B cell (primary cell): ENCODE measurements at regions of chr15 and their contacts with region 1.

Region 1: DNA sequence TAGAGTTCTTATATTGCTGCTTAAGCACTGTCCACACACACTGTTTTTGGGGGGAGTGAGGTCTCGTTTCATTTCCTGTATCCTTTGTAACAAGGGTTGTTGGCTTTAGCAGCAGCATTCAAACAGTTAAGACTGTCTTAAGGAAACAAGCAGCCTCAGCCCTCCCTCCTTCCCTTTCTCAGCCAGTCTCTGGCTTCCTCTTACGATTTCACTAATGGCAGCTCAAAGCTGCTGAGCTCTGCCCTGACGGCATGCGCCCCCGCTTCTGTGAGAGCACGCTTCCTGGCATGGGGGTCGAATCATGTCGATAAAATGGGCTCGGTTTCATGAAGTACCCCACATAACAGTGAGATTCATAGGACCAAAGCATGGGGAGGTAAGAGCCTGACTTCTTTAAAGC is 105.0 kb downstream of the KLHL25 start:
- DNase-seq: peak; percentile 75
- ATAC-seq: peak; percentile 68
- H3K4me3 ChIP-seq: peak overlapping the region; percentile 76 to 95 (median 81)
- H3K4me3 Mint-ChIP-seq: peak overlapping the region; percentile 98
- H3K27ac ChIP-seq: peak overlapping the region; percentile 84 to 85
- H3K27ac Mint-ChIP-seq: peak overlapping the region; percentile 98
- H3K4me1 ChIP-seq: peaks cover 68 to 70% of the 10 kb centered on the region in 2 donors
- H3K4me1 Mint-ChIP-seq: peaks cover 74% of the 10 kb centered on the region
- H3K27me3 ChIP-seq: no peaks in the 10 kb centered on the region
- H3K27me3 Mint-ChIP-seq: no peaks in the 10 kb centered on the region
- CTCF ChIP-seq: no peak

Region 2: DNA sequence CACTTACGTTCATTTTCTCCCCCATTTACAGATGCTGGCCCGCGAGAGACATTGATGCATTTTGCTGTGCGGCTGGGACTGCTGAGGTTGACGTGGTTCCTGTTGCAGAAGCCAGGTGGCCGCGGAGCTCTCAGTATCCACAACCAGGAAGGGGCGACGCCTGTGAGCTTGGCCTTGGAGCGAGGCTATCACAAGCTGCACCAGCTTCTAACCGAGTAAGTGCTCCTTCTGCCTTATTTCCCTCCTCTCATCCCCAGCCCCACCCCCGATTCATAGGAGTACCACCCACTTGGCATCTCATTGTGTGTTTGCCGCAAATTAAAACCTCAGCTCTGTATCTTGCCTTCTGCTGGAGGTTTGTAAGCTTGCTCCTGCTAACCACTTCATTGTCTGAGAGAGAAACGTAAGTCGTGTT is 146.0 kb before region 1 on chr15:
- CTCF ChIA-PET with region 1: no interaction called
- POLR2A ChIA-PET with region 1: interaction called, 3 read pairs
- intact Hi-C with region 1: loop called (anchors 5 kb)
- DNase-seq: peak; percentile 60
- ATAC-seq: peak; percentile 67
- H3K4me3 ChIP-seq: peak overlapping the region in 1 of 5 experiments; percentile 42
- H3K4me3 Mint-ChIP-seq: peak overlapping the region; percentile 60
- H3K27ac ChIP-seq: peak overlapping the region; percentile 28 to 42
- H3K27ac Mint-ChIP-seq: peak overlapping the region; percentile 62
- H3K4me1 ChIP-seq: peaks cover 54 to 59% of the 10 kb centered on the region in 2 donors
- H3K4me1 Mint-ChIP-seq: peaks cover 67% of the 10 kb centered on the region
- H3K27me3 ChIP-seq: no peaks in the 10 kb centered on the region
- H3K27me3 Mint-ChIP-seq: no peaks in the 10 kb centered on the region
- CTCF ChIP-seq: no peak

Region 3: GRCh38 chr15:85639752-85640381 is 49.9 kb before region 1 on chr15:
- CTCF ChIA-PET with region 1: no interaction called
- POLR2A ChIA-PET with region 1: no interaction called
- intact Hi-C with region 1: loop called (anchors 10 kb)
- DNase-seq: no peak
- ATAC-seq: no peak
- H3K4me3 ChIP-seq: no peak overlapping the region
- H3K4me3 Mint-ChIP-seq: no peak overlapping the region
- H3K27ac ChIP-seq: no peak overlapping the region
- H3K27ac Mint-ChIP-seq: no peak overlapping the region
- H3K4me1 ChIP-seq: peaks cover 0 to 1% of the 10 kb centered on the region in 2 donors
- H3K4me1 Mint-ChIP-seq: peaks cover 12% of the 10 kb centered on the region
- H3K27me3 ChIP-seq: no peaks in the 10 kb centered on the region
- H3K27me3 Mint-ChIP-seq: no peaks in the 10 kb centered on the region
- CTCF ChIP-seq: no peak

Region 4: GRCh38 chr15:85702321-85703101 is 12.8 kb after region 1 on chr15:
- CTCF ChIA-PET with region 1: interaction called, 25 read pairs
- POLR2A ChIA-PET with region 1: interaction called, 49 read pairs
- intact Hi-C with region 1: loop called (anchors 1 kb)
- DNase-seq: peak; percentile 47
- ATAC-seq: no peak
- H3K4me3 ChIP-seq: peak overlapping the region in 1 of 5 experiments; percentile 18
- H3K4me3 Mint-ChIP-seq: peak overlapping the region; percentile 84
- H3K27ac ChIP-seq: peak overlapping the region; percentile 61 to 86
- H3K27ac Mint-ChIP-seq: peak overlapping the region; percentile 94
- H3K4me1 ChIP-seq: peaks cover 57 to 58% of the 10 kb centered on the region in 2 donors
- H3K4me1 Mint-ChIP-seq: peaks cover 74% of the 10 kb centered on the region
- H3K27me3 ChIP-seq: no peaks in the 10 kb centered on the region
- H3K27me3 Mint-ChIP-seq: no peaks in the 10 kb centered on the region
- CTCF ChIP-seq: no peak

Region 5: DNA sequence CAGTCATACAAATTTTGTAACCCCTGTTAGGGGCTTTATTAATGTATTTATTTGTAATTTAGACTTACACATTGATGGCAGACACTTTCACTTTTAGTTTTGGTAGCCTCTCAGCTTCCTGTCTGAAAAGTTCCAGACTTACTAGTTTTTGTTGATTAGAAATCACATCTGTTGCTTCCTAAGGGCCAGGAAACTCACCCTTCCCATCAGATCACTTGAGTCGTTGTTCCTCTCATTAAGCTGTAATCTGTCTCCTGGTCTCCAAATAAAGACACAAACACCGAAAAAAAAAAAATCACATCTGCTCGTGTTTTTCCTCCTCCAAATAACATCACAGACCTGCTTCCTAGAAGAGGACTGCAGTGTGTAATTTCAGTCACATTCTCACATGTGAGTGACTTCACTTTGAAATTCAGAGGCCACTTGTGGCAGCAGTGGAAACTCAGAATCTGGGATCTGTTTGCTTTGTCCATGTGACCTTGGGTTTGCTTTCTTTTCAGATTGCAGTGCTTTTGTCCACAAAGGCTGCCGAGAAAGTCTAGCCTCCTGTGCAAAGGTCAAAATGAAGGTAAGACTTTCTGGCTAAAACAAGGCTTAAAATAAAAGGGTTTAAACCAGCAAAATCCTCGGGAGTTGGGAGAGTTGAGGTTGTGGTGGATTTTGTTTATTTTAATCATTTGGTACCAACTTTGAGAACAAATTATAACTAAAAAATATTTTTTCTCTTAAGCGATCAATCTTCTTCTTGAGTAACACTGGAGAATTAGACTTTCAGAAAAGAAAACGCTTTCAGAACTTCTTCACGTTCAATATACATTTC is 18.0 kb after region 1 on chr15:
- CTCF ChIA-PET with region 1: interaction called, 25 read pairs
- POLR2A ChIA-PET with region 1: interaction called, 49 read pairs
- intact Hi-C with region 1: loop called (anchors 1 kb)
- DNase-seq: no peak
- ATAC-seq: peak; percentile 37
- H3K4me3 ChIP-seq: peak overlapping the region; percentile 9 to 66 (median 29)
- H3K4me3 Mint-ChIP-seq: peak overlapping the region; percentile 82
- H3K27ac ChIP-seq: peak overlapping the region; percentile 96 to 99
- H3K27ac Mint-ChIP-seq: peak overlapping the region; percentile 96
- H3K4me1 ChIP-seq: peaks cover 51 to 56% of the 10 kb centered on the region in 2 donors
- H3K4me1 Mint-ChIP-seq: peaks cover 71% of the 10 kb centered on the region
- H3K27me3 ChIP-seq: no peaks in the 10 kb centered on the region
- H3K27me3 Mint-ChIP-seq: no peaks in the 10 kb centered on the region
- CTCF ChIP-seq: no peak

Region 6: DNA sequence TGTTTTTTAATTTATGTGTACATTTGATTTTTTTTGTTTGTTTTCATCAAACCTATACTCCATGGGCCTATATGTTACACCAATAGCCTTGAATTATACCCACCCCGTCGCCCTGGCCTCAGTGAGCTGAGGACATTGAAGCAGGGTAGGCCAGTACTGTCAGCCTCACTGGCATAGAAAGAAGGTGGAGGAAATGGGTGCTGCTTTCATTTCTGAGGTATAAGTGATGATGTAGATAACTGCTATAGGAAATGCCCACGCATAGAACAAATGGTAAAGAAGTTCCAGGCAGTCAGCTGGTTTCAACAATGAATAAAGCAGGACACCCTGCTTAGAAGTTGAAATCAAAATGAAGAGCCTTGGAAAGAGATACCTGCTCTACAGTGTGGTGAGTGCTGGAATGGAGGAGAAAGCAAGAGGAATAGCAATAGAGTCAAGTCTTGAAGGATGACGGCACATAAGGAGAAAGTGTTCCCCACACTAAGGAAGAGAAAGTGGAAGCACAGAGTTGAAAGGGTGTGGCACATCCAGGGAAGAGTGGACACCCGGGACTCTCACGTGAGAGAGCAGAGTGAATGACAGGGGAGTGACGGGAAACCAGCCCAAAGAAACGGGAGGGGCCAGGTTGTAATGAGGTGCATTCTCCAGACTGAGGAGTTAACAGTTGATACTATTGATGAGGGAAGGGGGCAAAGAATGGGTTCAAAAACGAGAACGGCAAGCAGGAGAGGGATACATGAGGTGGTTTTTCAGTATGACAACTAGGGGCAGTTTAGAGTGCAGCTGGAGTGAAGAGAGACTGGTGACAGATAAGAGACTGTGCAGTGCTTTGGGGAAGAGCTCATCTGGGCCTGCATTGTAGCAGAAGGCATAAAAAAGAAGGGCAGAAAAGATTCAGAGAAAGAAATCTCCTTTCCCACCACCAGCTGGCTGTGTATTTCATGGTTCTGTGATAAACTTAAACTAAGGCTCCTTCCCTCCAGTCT is 34.5 kb after region 1 on chr15:
- CTCF ChIA-PET with region 1: interaction called, 3 read pairs
- POLR2A ChIA-PET with region 1: no interaction called
- intact Hi-C with region 1: loop called (anchors 5 kb)
- DNase-seq: no peak
- ATAC-seq: no peak
- H3K4me3 ChIP-seq: no peak overlapping the region
- H3K4me3 Mint-ChIP-seq: no peak overlapping the region
- H3K27ac ChIP-seq: peak overlapping the region in 1 of 2 donors; percentile 44
- H3K27ac Mint-ChIP-seq: peak overlapping the region; percentile 2
- H3K4me1 ChIP-seq: no peaks in the 10 kb centered on the region
- H3K4me1 Mint-ChIP-seq: peaks cover 4% of the 10 kb centered on the region
- H3K27me3 ChIP-seq: no peaks in the 10 kb centered on the region
- H3K27me3 Mint-ChIP-seq: no peaks in the 10 kb centered on the region
- CTCF ChIP-seq: no peak

Region 7: DNA sequence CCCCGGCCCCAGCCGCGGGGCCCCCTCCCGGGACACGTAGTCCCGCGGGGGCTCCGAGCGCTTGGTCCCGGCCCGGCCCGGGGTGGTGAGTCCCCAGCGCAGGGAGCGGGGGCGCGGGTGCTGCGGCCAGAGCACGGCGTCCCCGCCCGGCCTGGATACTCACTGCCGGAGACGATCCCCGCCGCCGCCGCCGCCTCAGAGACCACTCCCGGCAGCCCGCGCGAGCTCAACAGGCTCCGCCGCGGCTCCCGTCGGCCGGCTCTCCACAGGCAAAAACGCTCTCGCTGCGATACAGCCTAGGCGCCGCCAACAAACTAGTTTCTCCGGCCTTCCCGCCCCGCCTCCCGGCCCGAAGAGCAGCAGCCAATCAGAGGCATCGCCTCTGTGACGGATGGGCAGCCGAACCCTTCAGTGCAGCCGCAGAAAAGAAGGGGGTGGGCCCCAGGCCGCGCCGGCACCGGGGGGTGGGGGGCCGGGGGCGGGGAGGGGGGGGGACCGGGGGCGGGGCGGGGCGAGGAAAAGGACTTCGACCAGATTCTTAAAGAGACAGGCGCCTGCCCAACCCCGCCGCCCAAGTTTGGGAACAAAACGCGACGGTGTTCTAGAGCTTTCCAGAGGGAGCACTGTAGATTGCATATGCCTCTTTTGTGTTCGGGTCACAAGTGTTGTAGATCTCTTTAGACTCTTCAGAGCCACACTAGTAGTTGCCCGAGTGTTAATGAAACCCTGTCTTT is 105.0 kb after region 1 on chr15 and contains the start of gene KLHL25:
- CTCF ChIA-PET with region 1: no interaction called
- POLR2A ChIA-PET with region 1: no interaction called
- intact Hi-C with region 1: loop called (anchors 2 kb)
- DNase-seq: peak; percentile 94
- ATAC-seq: peak; percentile 98
- H3K4me3 ChIP-seq: peak within 1 kb of the TSS; percentile 47 to 79 (median 68)
- H3K4me3 Mint-ChIP-seq: peak within 1 kb of the TSS; percentile 91
- H3K27ac ChIP-seq: peak within 1 kb of the TSS in 1 of 2 donors; percentile 66
- H3K27ac Mint-ChIP-seq: peak within 1 kb of the TSS; percentile 83
- H3K4me1 ChIP-seq: peaks cover 15 to 21% of the 10 kb centered on the region in 2 donors
- H3K4me1 Mint-ChIP-seq: peaks cover 24% of the 10 kb centered on the region
- H3K27me3 ChIP-seq: peaks cover 0 to 5% (median 0%) of the 10 kb centered on the region in 4 experiments
- H3K27me3 Mint-ChIP-seq: peaks cover 4% of the 10 kb centered on the region
- CTCF ChIP-seq: no peak
- total RNA-seq, gene KLHL25: 3.3 and 3.9 TPM in 2 replicates